ENCODE measurements at regions of chr2 and their contacts with region 1.

Region 1: DNA sequence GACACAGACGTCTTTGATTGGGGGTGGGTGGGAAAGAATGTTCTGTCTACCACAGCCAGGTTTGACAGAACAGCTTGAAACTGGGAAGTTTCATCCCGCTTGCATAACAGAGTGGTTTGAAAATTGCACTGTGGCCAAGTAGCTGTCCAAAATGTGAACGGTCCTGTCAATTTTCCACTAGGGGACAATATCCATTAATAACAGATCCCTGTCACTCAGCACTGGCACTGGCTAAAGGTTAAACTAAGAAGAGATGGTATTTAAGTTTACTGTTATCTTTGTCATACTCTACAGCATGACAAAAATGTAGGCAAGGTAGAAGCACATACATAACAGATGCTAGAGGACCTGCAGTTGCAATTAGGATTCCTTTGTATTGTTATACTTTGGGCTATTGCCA is 55.6 kb upstream of the ACMSD start:
- DNase-seq: peak; percentile 13 to 43
- H3K4me3 ChIP-seq: no peak overlapping the region
- H3K27ac ChIP-seq: no peak overlapping the region
- H3K4me1 ChIP-seq: no peaks in the 10 kb centered on the region
- H3K27me3 ChIP-seq: no peaks in the 10 kb centered on the region
- CTCF ChIP-seq: peak; percentile 79

Region 2: GRCh38 chr2:134452042-134452733 is 330.6 kb before region 1 on chr2:
- CTCF ChIA-PET with region 1: interaction called, 14 read pairs
- POLR2A ChIA-PET with region 1: no interaction called
- intact Hi-C with region 1: no loop called
- DNase-seq: no peak
- H3K4me3 ChIP-seq: no peak overlapping the region
- H3K27ac ChIP-seq: no peak overlapping the region
- H3K4me1 ChIP-seq: no peaks in the 10 kb centered on the region
- H3K27me3 ChIP-seq: no peaks in the 10 kb centered on the region
- CTCF ChIP-seq: no peak

Region 3: DNA sequence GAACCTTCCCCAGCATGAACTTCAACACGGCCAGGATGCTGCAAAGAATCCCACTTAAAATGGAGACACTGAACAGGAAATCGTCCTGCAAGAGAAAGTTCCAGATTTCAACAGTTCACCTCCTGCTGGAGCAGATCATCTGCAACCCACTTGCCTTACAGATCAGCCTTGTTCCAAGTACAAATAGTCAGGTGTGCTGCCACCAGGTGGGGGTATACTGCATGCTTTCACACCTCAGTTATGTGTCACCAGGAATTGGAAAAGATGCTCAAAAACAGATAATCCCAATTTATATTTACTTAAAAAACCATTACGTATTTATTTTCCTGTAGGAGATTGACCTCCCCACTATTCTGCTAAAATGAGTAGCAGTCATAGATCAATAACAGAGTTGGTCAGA is 316.7 kb before region 1 on chr2:
- CTCF ChIA-PET with region 1: no interaction called
- POLR2A ChIA-PET with region 1: no interaction called
- intact Hi-C with region 1: loop called (anchors 2 kb)
- DNase-seq: peak; percentile 39 to 45
- H3K4me3 ChIP-seq: no peak overlapping the region
- H3K27ac ChIP-seq: no peak overlapping the region
- H3K4me1 ChIP-seq: no peaks in the 10 kb centered on the region
- H3K27me3 ChIP-seq: no peaks in the 10 kb centered on the region
- CTCF ChIP-seq: peak; percentile 80

Region 4: DNA sequence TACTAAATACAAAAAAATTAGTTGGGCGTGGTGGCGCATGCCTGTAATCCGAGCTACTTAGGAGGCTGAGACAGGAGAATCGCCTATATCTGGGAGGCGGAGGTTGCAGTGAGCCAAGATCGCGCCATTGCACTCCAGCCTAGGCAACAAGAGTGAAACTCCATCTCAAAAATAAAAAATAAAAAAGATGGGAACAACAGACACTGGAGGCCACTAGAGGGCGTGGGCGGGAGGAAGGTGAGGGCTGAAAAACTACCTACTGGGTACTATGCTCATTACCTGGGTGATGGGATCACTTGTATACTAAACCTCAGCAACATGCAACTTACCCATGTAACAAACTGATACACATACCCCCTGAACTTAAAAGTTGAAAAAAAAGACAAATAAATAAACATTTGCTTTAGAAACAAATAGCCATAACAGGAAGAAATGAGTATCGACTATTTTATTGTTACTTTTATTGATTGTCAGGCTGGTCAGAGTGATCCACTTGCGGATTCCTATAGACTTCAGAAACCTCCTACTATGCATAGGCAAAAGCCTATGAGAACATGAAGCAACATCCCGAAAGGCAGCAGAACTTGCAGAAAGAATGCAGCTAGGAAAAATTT is 125.0 kb before region 1 on chr2:
- CTCF ChIA-PET with region 1: no interaction called
- POLR2A ChIA-PET with region 1: no interaction called
- intact Hi-C with region 1: loop called (anchors 5 kb)
- DNase-seq: peak in 1 of 2 experiments; percentile 15
- H3K4me3 ChIP-seq: no peak overlapping the region
- H3K27ac ChIP-seq: no peak overlapping the region
- H3K4me1 ChIP-seq: no peaks in the 10 kb centered on the region
- H3K27me3 ChIP-seq: no peaks in the 10 kb centered on the region
- CTCF ChIP-seq: peak; percentile 87

Region 5: GRCh38 chr2:134727385-134727784 is 55.4 kb before region 1 on chr2:
- CTCF ChIA-PET with region 1: no interaction called
- POLR2A ChIA-PET with region 1: no interaction called
- intact Hi-C with region 1: no loop called
- DNase-seq: peak; percentile 22 to 35
- H3K4me3 ChIP-seq: no peak overlapping the region
- H3K27ac ChIP-seq: no peak overlapping the region
- H3K4me1 ChIP-seq: peaks cover 10% of the 10 kb centered on the region; the same call in 1 of the 2 replicates
- H3K27me3 ChIP-seq: no peaks in the 10 kb centered on the region
- CTCF ChIP-seq: no peak

Region 6: GRCh38 chr2:134892282-134893070 is 109.7 kb after region 1 on chr2:
- CTCF ChIA-PET with region 1: interaction called, 14 read pairs
- POLR2A ChIA-PET with region 1: interaction called, 6 read pairs
- intact Hi-C with region 1: loop called (anchors 2 kb)
- DNase-seq: no peak
- H3K4me3 ChIP-seq: no peak overlapping the region
- H3K27ac ChIP-seq: no peak overlapping the region
- H3K4me1 ChIP-seq: no peaks in the 10 kb centered on the region
- H3K27me3 ChIP-seq: no peaks in the 10 kb centered on the region
- CTCF ChIP-seq: no peak

Region 7: GRCh38 chr2:134897932-134898331 is 115.1 kb after region 1 on chr2:
- CTCF ChIA-PET with region 1: interaction called, 14 read pairs
- POLR2A ChIA-PET with region 1: interaction called, 6 read pairs
- intact Hi-C with region 1: loop called (anchors 2 kb)
- DNase-seq: no peak
- H3K4me3 ChIP-seq: no peak overlapping the region
- H3K27ac ChIP-seq: no peak overlapping the region
- H3K4me1 ChIP-seq: no peaks in the 10 kb centered on the region
- H3K27me3 ChIP-seq: no peaks in the 10 kb centered on the region
- CTCF ChIP-seq: peak; percentile 67

Measured in PC-9 (cell line).